Natural killer cell (primary cell): ENCODE measurements at regions of chr10 and their contacts with region 1.

Region 1: DNA sequence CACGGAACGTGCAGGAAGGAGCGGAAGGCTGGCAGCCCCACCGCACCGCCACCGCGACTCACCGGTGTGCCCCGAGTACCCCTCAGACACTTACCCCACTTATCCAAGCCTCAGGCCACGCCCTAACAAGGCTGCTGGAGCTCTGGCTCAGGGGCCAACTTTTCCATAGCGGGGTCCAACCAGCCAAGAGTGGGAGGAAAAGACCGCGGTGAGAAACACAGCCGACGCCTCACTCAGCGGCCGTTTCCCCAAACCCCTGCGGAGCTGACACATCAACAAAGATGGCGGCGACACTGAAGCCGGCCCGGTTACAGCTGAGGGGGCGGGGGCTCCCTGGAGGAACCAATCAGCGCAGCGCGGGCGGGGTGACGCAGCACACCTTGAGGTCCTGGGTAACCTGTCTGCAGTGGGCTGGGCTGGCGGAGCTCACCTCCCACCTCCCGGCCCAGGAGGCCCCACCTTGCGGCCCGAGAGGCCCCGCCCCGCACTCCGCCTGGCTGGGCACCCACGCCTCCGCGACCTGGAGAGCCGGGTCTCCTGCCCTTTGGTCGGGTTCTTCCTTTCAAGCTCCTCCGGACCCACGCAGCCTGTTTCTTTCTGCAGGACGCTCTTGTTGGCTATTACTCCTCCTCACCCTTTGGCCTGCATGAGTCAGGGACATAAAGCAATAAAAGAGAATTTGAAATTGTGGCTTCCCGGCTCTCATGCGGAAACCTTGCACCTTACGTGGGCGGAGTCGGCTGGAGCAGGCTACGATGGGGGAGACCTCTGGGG is at the start of gene CCDC186:
- DNase-seq: peak; percentile 97 to 98
- ATAC-seq: peak; percentile 94 to 100 (median 97)
- H3K4me3 ChIP-seq: peak within 1 kb of the TSS; percentile 88
- H3K4me3 Mint-ChIP-seq: peak within 1 kb of the TSS; percentile 100
- H3K27ac ChIP-seq: peak within 1 kb of the TSS; percentile 90
- H3K27ac Mint-ChIP-seq: peak within 1 kb of the TSS; percentile 98 to 100
- H3K4me1 ChIP-seq: peaks cover 6% of the 10 kb centered on the region
- H3K4me1 Mint-ChIP-seq: peaks cover 42 to 45% of the 10 kb centered on the region in 2 donors
- H3K27me3 ChIP-seq: no peaks in the 10 kb centered on the region
- H3K27me3 Mint-ChIP-seq: peaks cover 10 to 24% of the 10 kb centered on the region in 2 donors
- CTCF ChIP-seq: no peak
- total RNA-seq, gene CCDC186: 51.1 to 66.9 (median 54.0) TPM

Region 2: GRCh38 chr10:113678690-113679462 is 495.2 kb before region 1 on chr10:
- intact Hi-C with region 1: loop called (anchors 1 kb)
- DNase-seq: peak; percentile 45 to 76
- ATAC-seq: peak; percentile 4 to 43 (median 24)
- H3K4me3 ChIP-seq: peak overlapping the region; percentile 60
- H3K4me3 Mint-ChIP-seq: peak overlapping the region; percentile 96
- H3K27ac ChIP-seq: peak overlapping the region; percentile 98
- H3K27ac Mint-ChIP-seq: peak overlapping the region; percentile 92 to 95
- H3K4me1 ChIP-seq: peaks cover 27% of the 10 kb centered on the region
- H3K4me1 Mint-ChIP-seq: peaks cover 42 to 45% of the 10 kb centered on the region in 2 donors
- H3K27me3 ChIP-seq: no peaks in the 10 kb centered on the region
- H3K27me3 Mint-ChIP-seq: peaks cover 0 to 7% of the 10 kb centered on the region in 2 donors
- CTCF ChIP-seq: peak; percentile 52

Region 3: DNA sequence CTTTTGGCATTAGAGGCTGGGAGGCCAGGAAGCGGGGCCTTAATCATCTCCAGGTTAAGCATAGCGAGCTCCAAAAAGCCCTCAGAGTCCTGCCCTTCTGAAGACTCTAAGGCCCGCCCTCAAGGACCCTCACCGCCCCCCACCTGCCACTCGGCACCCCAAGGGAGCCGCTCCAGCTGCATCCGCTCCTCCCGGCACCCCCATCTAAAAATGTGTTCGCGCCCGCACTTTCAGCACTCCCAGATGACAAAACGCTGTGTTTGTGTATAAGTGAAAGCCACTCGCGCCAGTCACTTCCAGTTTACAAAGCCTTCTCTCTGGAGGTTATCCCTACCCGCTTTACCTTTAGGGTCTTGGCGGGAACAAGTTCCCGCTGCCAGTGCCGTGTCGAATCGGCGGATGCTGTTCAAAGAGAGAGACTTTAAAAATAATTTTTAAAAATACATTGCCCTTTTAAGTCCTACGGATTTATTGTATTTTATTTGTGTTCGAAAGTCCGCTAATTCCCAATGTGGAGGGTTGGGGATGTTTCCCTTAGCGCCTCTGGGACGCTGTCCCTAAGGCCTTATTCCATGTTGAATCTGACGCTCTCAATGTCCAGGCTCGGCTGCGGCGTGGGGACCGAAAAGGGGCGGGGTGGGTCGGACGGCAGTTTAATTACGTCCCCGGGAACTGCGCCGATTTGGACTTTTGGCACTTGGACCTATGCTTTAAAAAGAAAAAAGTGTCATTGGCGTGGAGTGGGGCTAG is 319.9 kb before region 1 on chr10 and contains the starts of genes DCLRE1A and NHLRC2:
- intact Hi-C with region 1: loop called (anchors 2 kb)
- DNase-seq: peak; percentile 54 to 77
- ATAC-seq: peak; percentile 60 to 76 (median 74)
- H3K4me3 ChIP-seq: peak within 1 kb of the TSS; percentile 68
- H3K4me3 Mint-ChIP-seq: peak within 1 kb of the TSS; percentile 97
- H3K27ac ChIP-seq: peak within 1 kb of the TSS; percentile 76
- H3K27ac Mint-ChIP-seq: peak within 1 kb of the TSS; percentile 92 to 96
- H3K4me1 ChIP-seq: peaks cover 24% of the 10 kb centered on the region
- H3K4me1 Mint-ChIP-seq: peaks cover 36 to 37% of the 10 kb centered on the region in 2 donors
- H3K27me3 ChIP-seq: no peaks in the 10 kb centered on the region
- H3K27me3 Mint-ChIP-seq: no peaks in the 10 kb centered on the region
- CTCF ChIP-seq: no peak
- total RNA-seq, gene DCLRE1A: 4.4 to 5.9 (median 5.2) TPM
- total RNA-seq, gene NHLRC2: 19.0 to 24.7 (median 22.4) TPM

Region 4: GRCh38 chr10:114328874-114329273 is 154.8 kb after region 1 on chr10:
- intact Hi-C with region 1: no loop called
- DNase-seq: no peak
- ATAC-seq: no peak
- H3K4me3 ChIP-seq: no peak overlapping the region
- H3K4me3 Mint-ChIP-seq: no peak overlapping the region
- H3K27ac ChIP-seq: no peak overlapping the region
- H3K27ac Mint-ChIP-seq: no peak overlapping the region
- H3K4me1 ChIP-seq: no peaks in the 10 kb centered on the region
- H3K4me1 Mint-ChIP-seq: no peaks in the 10 kb centered on the region
- H3K27me3 ChIP-seq: no peaks in the 10 kb centered on the region
- H3K27me3 Mint-ChIP-seq: peaks cover 0 to 5% of the 10 kb centered on the region in 2 donors
- CTCF ChIP-seq: no peak

Region 5: DNA sequence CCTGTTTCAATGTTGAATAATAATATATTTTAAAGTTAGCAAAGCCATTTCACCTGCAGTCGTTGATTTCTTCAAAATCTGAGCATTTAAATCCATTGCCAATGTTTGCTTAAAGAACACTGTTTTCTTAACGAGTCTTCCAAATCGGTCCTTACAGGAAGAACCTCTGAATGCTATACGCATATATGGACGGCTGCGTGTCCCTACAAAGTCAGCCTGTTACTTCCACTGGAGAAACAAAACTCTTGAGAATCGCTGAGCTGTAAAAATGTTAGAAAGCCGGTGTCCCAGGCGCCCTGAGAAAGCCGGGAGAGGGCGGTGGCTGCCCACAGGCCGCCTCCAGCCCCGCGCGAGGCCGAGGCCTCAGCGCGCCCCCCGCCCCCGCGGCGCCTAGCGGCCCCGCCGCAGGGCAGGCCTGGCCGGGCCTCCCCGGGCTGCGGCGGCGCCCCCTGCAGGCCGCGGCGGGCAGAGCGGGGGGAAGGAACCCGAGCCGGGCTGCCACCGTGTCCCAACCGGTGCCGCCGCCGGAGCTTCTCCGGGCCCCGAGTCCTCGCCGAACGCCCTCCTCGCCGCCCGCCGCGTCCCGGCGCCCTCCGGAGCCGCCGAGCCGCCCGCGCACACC is 647.3 kb after region 1 on chr10 and contains the start of gene FHIP2A:
- intact Hi-C with region 1: loop called (anchors 5 kb)
- DNase-seq: peak; percentile 88 to 90
- ATAC-seq: peak; percentile 92 to 98 (median 93)
- H3K4me3 ChIP-seq: peak within 1 kb of the TSS; percentile 79
- H3K4me3 Mint-ChIP-seq: peak within 1 kb of the TSS; percentile 94
- H3K27ac ChIP-seq: peak within 1 kb of the TSS; percentile 75
- H3K27ac Mint-ChIP-seq: peak within 1 kb of the TSS; percentile 94 to 95
- H3K4me1 ChIP-seq: peaks cover 4% of the 10 kb centered on the region
- H3K4me1 Mint-ChIP-seq: peaks cover 27 to 34% of the 10 kb centered on the region in 2 donors
- H3K27me3 ChIP-seq: no peaks in the 10 kb centered on the region
- H3K27me3 Mint-ChIP-seq: peaks cover 0 to 9% of the 10 kb centered on the region in 2 donors
- CTCF ChIP-seq: peak; percentile 51
- total RNA-seq, gene FHIP2A: 36.0 to 42.4 (median 39.5) TPM